ENCODE measurements at regions of chr15 and their contacts with region 1.

Region 1: GRCh38 chr15:88904624-88905327 is 8.4 kb downstream of the MFGE8 start:
- DNase-seq: peak; percentile 32
- ATAC-seq: peak; percentile 96
- H3K4me3 ChIP-seq: no peak overlapping the region
- H3K27ac ChIP-seq: no peak overlapping the region
- H3K4me1 ChIP-seq: no peaks in the 10 kb centered on the region
- H3K27me3 ChIP-seq: no peaks in the 10 kb centered on the region; a peak in 1 of 4 replicates
- CTCF ChIP-seq: peak; percentile 90 to 98 (median 98)
- EP300 ChIP-seq: no peak
- POLR2A ChIP-seq: no peak
- RAD21 ChIP-seq: peak; percentile 88

Region 2: GRCh38 chr15:88834211-88834812 is 70.5 kb before region 1 on chr15:
- CTCF ChIA-PET with region 1: no interaction called
- POLR2A ChIA-PET with region 1: no interaction called
- RAD21 ChIA-PET with region 1: no interaction called
- SMC1A ChIA-PET with region 1: no interaction called
- in situ Hi-C with region 1: no loop called
- intact Hi-C with region 1: no loop called
- DNase-seq: no peak
- ATAC-seq: peak; percentile 81
- H3K4me3 ChIP-seq: no peak overlapping the region
- H3K27ac ChIP-seq: no peak overlapping the region
- H3K4me1 ChIP-seq: no peaks in the 10 kb centered on the region
- H3K27me3 ChIP-seq: no peaks in the 10 kb centered on the region; a peak in 1 of 4 replicates
- CTCF ChIP-seq: peak; percentile 37 to 53 (median 51)
- EP300 ChIP-seq: no peak
- POLR2A ChIP-seq: no peak
- RAD21 ChIP-seq: peak; percentile 61

Region 3: GRCh38 chr15:88865498-88866099 is 39.2 kb before region 1 on chr15:
- CTCF ChIA-PET with region 1: no interaction called
- POLR2A ChIA-PET with region 1: no interaction called
- RAD21 ChIA-PET with region 1: no interaction called
- SMC1A ChIA-PET with region 1: no interaction called
- in situ Hi-C with region 1: no loop called
- intact Hi-C with region 1: no loop called
- DNase-seq: no peak
- ATAC-seq: no peak
- H3K4me3 ChIP-seq: no peak overlapping the region
- H3K27ac ChIP-seq: no peak overlapping the region
- H3K4me1 ChIP-seq: no peaks in the 10 kb centered on the region
- H3K27me3 ChIP-seq: no peaks in the 10 kb centered on the region; a peak in 2 of 4 replicates
- CTCF ChIP-seq: no peak
- EP300 ChIP-seq: no peak
- POLR2A ChIP-seq: no peak
- RAD21 ChIP-seq: no peak

Region 4: GRCh38 chr15:88894348-88894818 is 10.4 kb before region 1 on chr15:
- CTCF ChIA-PET with region 1: interaction called, 18 read pairs
- POLR2A ChIA-PET with region 1: interaction called, 5 read pairs
- RAD21 ChIA-PET with region 1: interaction called, 9 read pairs
- SMC1A ChIA-PET with region 1: interaction called, 6 read pairs
- in situ Hi-C with region 1: no loop called
- intact Hi-C with region 1: no loop called
- DNase-seq: no peak
- ATAC-seq: peak; percentile 75
- H3K4me3 ChIP-seq: peak overlapping the region; percentile 38; the same call in 1 of the 2 replicates
- H3K27ac ChIP-seq: no peak overlapping the region
- H3K4me1 ChIP-seq: peaks cover 3% of the 10 kb centered on the region
- H3K27me3 ChIP-seq: peaks cover 0 to 5% of the 10 kb centered on the region in 2 experiments; a peak in 2 of 4 replicates
- CTCF ChIP-seq: peak; percentile 73 to 92 (median 82)
- EP300 ChIP-seq: no peak
- POLR2A ChIP-seq: no peak
- RAD21 ChIP-seq: peak; percentile 48

Region 5: DNA sequence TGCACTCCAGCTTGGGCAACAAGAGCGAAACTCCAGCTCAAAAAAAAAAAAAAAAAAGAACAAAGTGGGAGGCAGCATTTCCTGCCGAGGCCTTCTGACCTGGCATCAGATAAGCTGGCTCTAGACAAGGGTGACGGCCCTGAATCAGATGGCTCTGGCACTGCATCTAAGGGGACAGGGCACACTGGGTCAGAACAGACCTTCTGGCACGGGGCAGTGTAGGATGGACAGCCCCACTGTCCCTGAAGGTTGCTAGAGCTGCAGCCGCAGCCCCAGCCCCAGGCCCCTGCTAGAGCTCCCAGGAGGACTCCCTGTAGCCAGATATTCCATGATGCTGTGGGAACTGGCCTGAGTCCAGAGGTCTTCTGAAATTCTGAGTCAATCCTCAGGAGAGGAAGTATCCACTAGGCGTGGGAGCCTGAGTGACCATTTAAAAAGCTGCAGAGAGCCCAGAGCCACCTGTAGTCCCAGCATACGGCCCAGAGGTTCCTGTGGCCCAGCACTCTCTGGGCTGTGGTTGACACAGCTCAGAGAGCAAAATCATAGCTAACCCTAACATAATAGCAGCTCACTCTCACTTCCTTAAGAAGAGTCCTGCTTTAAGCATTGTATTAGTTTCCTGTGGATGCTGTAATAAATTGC is 77.6 kb after region 1 on chr15:
- CTCF ChIA-PET with region 1: interaction called, 16 read pairs
- POLR2A ChIA-PET with region 1: no interaction called
- RAD21 ChIA-PET with region 1: interaction called, 4 read pairs
- SMC1A ChIA-PET with region 1: interaction called, 11 read pairs
- in situ Hi-C with region 1: no loop called
- intact Hi-C with region 1: loop called (anchors 2 kb)
- DNase-seq: peak; percentile 83
- ATAC-seq: peak; percentile 97
- H3K4me3 ChIP-seq: no peak overlapping the region
- H3K27ac ChIP-seq: no peak overlapping the region
- H3K4me1 ChIP-seq: peaks cover 19% of the 10 kb centered on the region
- H3K27me3 ChIP-seq: no peaks in the 10 kb centered on the region
- CTCF ChIP-seq: no peak
- EP300 ChIP-seq: peak; percentile 56 to 82; a peak in 3 of 4 replicates
- POLR2A ChIP-seq: no peak
- RAD21 ChIP-seq: no peak

Region 6: GRCh38 chr15:89017370-89018066 is 112.7 kb after region 1 on chr15:
- CTCF ChIA-PET with region 1: interaction called, 73 read pairs
- POLR2A ChIA-PET with region 1: no interaction called
- RAD21 ChIA-PET with region 1: interaction called, 11 read pairs
- SMC1A ChIA-PET with region 1: interaction called, 20 read pairs
- in situ Hi-C with region 1: loop called (anchors 5 kb)
- intact Hi-C with region 1: loop called (anchors 1 kb)
- DNase-seq: peak; percentile 48
- ATAC-seq: peak; percentile 95
- H3K4me3 ChIP-seq: no peak overlapping the region
- H3K27ac ChIP-seq: no peak overlapping the region
- H3K4me1 ChIP-seq: no peaks in the 10 kb centered on the region
- H3K27me3 ChIP-seq: peaks cover 1 to 9% of the 10 kb centered on the region in 2 experiments; a peak in 2 of 4 replicates
- CTCF ChIP-seq: peak; percentile 79 to 86 (median 84)
- EP300 ChIP-seq: 0 out of 4 replicates have a peak, but pooled peaks of 1 of the 2 experiments have one; percentile 14
- POLR2A ChIP-seq: no peak
- RAD21 ChIP-seq: peak; percentile 72

Region 7: GRCh38 chr15:89034288-89034687 is 129.5 kb after region 1 on chr15:
- CTCF ChIA-PET with region 1: interaction called, 18 read pairs
- POLR2A ChIA-PET with region 1: no interaction called
- RAD21 ChIA-PET with region 1: interaction called, 4 read pairs
- SMC1A ChIA-PET with region 1: no interaction called
- in situ Hi-C with region 1: no loop called
- intact Hi-C with region 1: no loop called
- DNase-seq: no peak
- ATAC-seq: no peak; the same call in 2 of the 3 replicates
- H3K4me3 ChIP-seq: no peak overlapping the region
- H3K27ac ChIP-seq: no peak overlapping the region
- H3K4me1 ChIP-seq: no peaks in the 10 kb centered on the region
- H3K27me3 ChIP-seq: no peaks in the 10 kb centered on the region
- CTCF ChIP-seq: peak in 2 of 3 experiments; percentile 15 to 34; a peak in 3 of 6 replicates
- EP300 ChIP-seq: no peak
- POLR2A ChIP-seq: no peak
- RAD21 ChIP-seq: 0 out of 2 replicates have a peak, but pooled peaks have one; percentile 18

Region 8: DNA sequence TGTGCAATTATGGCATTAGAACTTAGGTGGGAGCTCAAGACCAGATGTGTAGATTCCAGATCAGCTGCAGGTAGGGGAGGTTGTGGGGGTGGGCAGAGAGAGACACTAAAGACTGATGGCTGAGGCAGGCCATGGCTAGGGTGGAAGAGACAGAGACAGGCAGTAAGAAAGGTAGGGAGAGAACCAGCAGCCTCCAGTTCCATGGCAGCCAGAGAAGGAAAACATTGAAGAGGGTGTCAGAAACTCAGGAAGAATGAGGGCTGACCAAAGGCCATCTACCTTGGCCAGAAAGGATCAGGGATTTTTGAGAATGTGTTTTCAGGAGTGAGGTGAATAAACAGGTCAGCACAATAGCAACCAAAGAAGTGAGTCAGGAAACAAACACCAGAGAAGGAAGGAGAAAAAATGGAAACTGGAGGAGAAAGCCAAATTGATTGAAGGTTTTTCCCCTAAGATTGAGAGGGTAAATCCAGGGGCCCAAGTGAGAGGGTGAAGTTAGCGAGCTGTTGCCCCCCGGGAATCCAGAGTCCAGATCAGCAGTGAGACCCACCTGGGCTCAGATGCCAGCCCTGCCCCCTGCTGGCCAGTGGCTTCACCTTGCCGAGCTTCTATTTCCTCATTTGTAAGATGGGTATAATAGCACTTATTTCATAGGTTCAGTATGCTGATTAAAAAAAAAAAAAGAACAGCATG is 224.5 kb after region 1 on chr15:
- CTCF ChIA-PET with region 1: interaction called, 19 read pairs
- POLR2A ChIA-PET with region 1: no interaction called
- RAD21 ChIA-PET with region 1: interaction called, 16 read pairs
- SMC1A ChIA-PET with region 1: interaction called, 7 read pairs
- in situ Hi-C with region 1: no loop called
- intact Hi-C with region 1: no loop called
- DNase-seq: no peak
- ATAC-seq: peak; percentile 95
- H3K4me3 ChIP-seq: no peak overlapping the region
- H3K27ac ChIP-seq: no peak overlapping the region
- H3K4me1 ChIP-seq: no peaks in the 10 kb centered on the region
- H3K27me3 ChIP-seq: no peaks in the 10 kb centered on the region
- CTCF ChIP-seq: peak; percentile 68 to 82 (median 81)
- EP300 ChIP-seq: no peak
- POLR2A ChIP-seq: no peak
- RAD21 ChIP-seq: peak; percentile 70

Region 9: DNA sequence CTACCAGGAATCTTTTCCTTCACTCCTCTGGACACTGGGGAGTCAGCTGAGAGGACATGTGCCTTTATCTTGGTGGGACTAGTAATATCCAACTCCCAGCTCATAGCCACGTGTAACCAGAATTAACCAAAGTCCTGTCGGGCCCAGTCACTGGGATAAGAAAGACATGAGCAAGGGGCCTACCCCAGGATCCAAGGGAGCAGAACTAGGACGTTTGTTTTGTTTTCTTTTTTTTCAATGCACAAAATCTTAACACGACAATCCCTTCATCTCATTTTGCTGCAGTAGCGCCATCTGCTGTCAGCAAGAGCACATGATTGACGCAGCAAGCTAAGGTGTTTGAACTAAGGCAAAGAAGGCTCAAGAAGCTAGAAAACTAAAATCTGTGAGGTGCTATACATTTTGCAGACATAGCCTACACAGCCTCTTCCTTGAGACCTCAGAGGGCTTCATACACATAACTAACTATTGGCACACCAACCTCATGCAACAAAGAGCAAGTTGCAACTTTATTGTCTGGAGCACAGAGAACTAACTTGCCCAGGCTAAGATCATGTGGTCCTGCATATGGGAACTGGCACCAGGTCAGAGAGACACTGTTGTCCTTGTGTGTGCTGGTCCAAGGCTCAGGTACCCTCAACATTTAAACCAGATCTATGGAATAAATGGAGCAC is 273.0 kb after region 1 on chr15:
- CTCF ChIA-PET with region 1: interaction called, 32 read pairs
- POLR2A ChIA-PET with region 1: no interaction called
- RAD21 ChIA-PET with region 1: interaction called, 6 read pairs
- SMC1A ChIA-PET with region 1: interaction called, 7 read pairs
- in situ Hi-C with region 1: loop called (anchors 5 kb)
- intact Hi-C with region 1: no loop called
- DNase-seq: peak; percentile 15
- ATAC-seq: peak; percentile 76
- H3K4me3 ChIP-seq: no peak overlapping the region
- H3K27ac ChIP-seq: no peak overlapping the region
- H3K4me1 ChIP-seq: peaks cover 7% of the 10 kb centered on the region; the same call in 1 of the 2 replicates
- H3K27me3 ChIP-seq: no peaks in the 10 kb centered on the region
- CTCF ChIP-seq: peak; percentile 76 to 92 (median 87); a peak in 5 of 6 replicates
- EP300 ChIP-seq: no peak
- POLR2A ChIP-seq: no peak
- RAD21 ChIP-seq: peak; percentile 88